Activated naive CD4-positive, alpha-beta T cell treated with anti-CD3 and anti-CD28 coated beads for 36 hours (primary cell): ENCODE measurements at regions of chr2 and their contacts with region 1.

Region 1: DNA sequence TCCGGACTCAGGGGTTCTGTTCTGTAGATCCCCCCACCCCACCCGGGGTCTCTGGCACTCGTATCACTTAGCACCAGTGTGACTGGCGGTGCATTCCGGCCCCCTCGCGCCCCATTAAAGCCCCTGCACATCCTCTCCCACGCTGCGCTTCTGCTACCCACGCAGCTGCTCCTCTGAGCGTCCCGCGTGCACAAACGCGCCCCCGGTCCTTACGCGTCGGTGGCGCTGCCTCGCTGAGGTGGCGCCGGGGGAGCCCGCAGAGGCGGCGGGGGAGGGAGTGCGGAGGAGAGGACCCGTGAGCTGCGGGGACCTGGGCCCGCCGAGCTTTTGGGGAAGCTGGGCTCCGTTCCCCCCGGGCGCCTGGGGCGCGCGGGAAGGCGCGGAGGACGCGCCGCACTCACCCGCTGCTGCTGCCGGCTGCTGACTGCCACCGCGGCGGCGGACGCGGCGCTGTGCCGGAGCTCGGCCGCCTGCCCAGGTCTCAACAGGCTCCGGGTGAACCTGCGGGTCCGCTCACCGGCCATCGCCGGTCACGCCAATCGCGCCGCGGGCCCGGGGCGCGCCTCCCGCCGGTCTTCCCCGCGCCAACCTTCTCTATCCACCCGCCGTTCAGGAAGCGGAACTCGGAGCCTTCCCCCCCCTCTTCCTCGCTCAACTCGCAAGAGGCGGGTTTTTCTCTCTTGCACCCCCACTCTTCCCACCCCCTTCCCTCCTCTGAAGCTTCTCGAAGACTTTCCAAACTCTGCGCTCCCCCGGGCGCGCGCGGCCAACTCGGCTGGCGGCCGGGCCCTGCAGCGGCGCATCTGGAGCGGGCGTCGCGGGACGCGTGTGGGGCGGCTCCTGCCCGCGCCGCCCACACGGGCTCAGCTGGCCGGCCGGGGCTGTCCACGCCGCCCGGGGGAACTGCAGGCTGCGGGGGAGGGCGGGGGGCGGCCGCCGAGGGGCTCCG is at the start of gene DOCK10:
- DNase-seq: peak; percentile 60
- H3K4me3 Mint-ChIP-seq: peak within 1 kb of the TSS; percentile 85
- H3K27ac Mint-ChIP-seq: peak within 1 kb of the TSS; percentile 96
- H3K4me1 Mint-ChIP-seq: peaks cover 39% of the 10 kb centered on the region
- H3K27me3 Mint-ChIP-seq: no peaks in the 10 kb centered on the region
- total RNA-seq, gene DOCK10: 123 to 137 TPM

Region 2: DNA sequence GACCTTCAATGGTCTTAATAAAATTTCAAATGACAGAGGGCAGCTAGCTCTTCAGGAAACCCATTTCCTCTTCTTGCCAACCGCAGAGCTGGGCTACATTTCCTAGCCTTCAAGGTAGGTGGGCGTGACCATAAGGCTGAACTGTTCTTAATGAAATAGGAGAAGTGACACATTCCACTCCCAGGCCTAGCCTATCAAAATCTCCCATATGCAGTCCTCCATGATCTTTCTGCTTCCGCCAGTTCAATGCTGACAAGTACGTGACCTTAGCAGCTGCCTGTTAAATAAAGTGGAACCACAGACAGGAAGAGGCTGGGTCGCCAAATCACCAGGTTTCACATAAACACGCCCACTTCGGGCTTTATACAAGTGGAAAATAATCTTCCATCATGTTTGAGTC is 1016.3 kb before region 1 on chr2:
- CTCF ChIA-PET with region 1: no interaction called
- intact Hi-C with region 1: loop called (anchors 10 kb)
- DNase-seq: peak; percentile 84
- H3K4me3 Mint-ChIP-seq: peak overlapping the region; percentile 64
- H3K27ac Mint-ChIP-seq: peak overlapping the region; percentile 95
- H3K4me1 Mint-ChIP-seq: peaks cover 84% of the 10 kb centered on the region
- H3K27me3 Mint-ChIP-seq: no peaks in the 10 kb centered on the region

Region 3: GRCh38 chr2:224347176-224348051 is 694.7 kb before region 1 on chr2:
- CTCF ChIA-PET with region 1: no interaction called
- intact Hi-C with region 1: no loop called
- DNase-seq: no peak
- H3K4me3 Mint-ChIP-seq: no peak overlapping the region
- H3K27ac Mint-ChIP-seq: no peak overlapping the region
- H3K4me1 Mint-ChIP-seq: no peaks in the 10 kb centered on the region
- H3K27me3 Mint-ChIP-seq: no peaks in the 10 kb centered on the region

Region 4: GRCh38 chr2:224885836-224886547 is 156.1 kb before region 1 on chr2:
- CTCF ChIA-PET with region 1: no interaction called
- intact Hi-C with region 1: loop called (anchors 1 kb)
- DNase-seq: no peak
- H3K4me3 Mint-ChIP-seq: no peak overlapping the region
- H3K27ac Mint-ChIP-seq: peak overlapping the region; percentile 81
- H3K4me1 Mint-ChIP-seq: peaks cover 71% of the 10 kb centered on the region
- H3K27me3 Mint-ChIP-seq: no peaks in the 10 kb centered on the region

Region 5: DNA sequence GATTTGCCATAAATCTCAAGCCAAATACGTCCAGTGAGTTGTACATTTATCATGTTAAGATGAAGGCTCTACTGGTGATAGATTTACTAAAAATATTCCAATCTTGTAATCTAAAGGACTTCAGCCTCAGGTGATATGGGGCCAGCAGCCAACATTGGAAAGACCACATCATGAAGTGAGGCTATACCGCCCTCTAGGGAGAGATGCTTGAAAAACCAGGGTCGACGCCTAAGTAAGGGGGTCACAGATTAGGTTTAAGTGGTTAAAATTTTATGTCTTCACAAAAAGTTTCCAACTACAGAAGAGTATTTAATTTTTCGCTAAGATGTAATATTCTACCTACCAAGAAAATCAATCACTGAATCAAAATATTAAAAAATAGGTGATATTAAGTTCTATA is 33.2 kb before region 1 on chr2:
- CTCF ChIA-PET with region 1: interaction called, 4 read pairs
- intact Hi-C with region 1: loop called (anchors 1 kb)
- DNase-seq: peak; percentile 47
- H3K4me3 Mint-ChIP-seq: no peak overlapping the region
- H3K27ac Mint-ChIP-seq: no peak overlapping the region
- H3K4me1 Mint-ChIP-seq: peaks cover 92% of the 10 kb centered on the region
- H3K27me3 Mint-ChIP-seq: no peaks in the 10 kb centered on the region

Region 6: GRCh38 chr2:225052703-225053102 is 10.6 kb after region 1 on chr2:
- CTCF ChIA-PET with region 1: interaction called, 8 read pairs
- intact Hi-C with region 1: loop called (anchors 1 kb)
- DNase-seq: peak; percentile 42
- H3K4me3 Mint-ChIP-seq: no peak overlapping the region
- H3K27ac Mint-ChIP-seq: peak overlapping the region; percentile 70
- H3K4me1 Mint-ChIP-seq: peaks cover 49% of the 10 kb centered on the region
- H3K27me3 Mint-ChIP-seq: no peaks in the 10 kb centered on the region